ENCODE measurements at regions of chr10 and their contacts with region 1.

Region 1: DNA sequence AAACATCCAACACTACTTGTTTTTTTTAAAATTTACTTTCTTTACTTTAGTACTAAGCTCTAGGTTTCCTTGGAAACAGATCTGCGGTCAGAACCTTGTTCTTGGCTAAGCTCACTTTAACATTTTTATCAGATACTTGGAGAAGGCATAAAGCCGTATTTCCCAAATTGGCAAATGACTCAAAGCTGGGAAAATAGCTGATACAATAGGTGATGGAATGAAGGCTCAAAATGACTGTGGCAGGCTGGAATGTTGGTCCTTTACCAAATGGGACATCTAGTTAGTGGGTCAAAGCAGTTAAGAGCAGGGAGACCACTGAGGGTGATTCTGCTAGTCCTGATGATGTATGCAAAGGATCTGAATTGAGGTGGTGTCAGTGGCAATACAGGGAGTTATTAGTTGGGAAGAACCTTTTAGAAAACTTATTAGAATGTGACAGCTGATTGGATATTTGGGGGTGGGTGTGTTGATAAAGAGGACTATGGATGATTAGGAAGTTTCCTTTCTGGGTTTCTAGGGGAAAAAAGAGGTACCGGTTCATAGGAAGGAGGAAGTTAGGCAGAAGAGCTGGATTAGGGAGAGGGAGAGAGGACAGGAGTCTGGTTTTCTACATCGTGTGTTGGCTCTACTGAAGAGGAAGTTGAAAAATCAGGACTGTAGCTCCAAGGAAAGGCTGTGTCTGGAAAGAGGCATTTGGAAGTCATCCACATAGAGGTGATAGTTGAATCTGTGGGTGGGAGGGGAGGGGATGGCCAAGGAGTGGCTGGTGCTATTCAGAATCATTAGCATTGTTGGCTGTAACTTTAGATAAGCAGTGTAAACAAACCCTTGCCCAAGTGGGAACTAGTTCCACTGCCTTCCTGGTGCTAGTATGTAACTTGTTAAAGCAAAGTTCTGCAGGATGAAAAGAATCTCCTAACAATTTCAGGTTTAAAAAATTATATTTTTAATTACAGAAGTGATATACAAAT is 13.1 kb downstream of the PLCE1 start:
- DNase-seq: no peak

Region 2: GRCh38 chr10:93893646-93894515 is 113.0 kb before region 1 on chr10 and contains the start of gene SLC35G1:
- intact Hi-C with region 1: no loop called
- DNase-seq: peak; percentile 81
- total RNA-seq, gene SLC35G1: 2.8 TPM

Region 3: DNA sequence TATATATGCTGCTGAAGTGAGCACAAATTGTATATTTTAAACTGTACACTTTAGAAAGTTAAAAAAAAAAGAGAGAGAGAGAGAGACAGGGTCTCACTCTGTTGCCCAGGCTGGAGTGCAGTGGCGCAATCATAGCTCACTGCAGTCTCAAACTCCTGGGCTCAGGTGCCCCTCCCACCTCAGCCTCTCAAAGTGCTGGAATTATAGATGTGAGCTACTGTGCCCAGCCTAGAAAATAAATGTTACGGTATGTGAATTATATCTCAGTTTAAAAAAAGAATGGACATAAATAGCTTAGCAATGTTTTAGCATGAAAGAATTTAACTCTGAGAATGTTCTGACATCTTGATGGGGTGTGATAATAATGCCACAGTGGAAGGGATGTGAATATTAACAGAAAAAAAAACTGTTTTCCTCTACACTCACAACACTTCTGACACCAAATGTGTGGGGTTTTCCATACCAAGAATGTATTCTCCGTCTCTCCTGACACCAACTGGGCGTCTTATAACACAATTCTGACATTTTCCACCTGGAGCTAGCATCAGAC is 148.9 kb after region 1 on chr10:
- intact Hi-C with region 1: loop called (anchors 10 kb)
- DNase-seq: no peak

Measured in cardiac septum (tissue), 1 donor.